Common myeloid progenitor, CD34-positive (primary cell): ENCODE measurements at regions of chr6 and their contacts with region 1.

Region 1: DNA sequence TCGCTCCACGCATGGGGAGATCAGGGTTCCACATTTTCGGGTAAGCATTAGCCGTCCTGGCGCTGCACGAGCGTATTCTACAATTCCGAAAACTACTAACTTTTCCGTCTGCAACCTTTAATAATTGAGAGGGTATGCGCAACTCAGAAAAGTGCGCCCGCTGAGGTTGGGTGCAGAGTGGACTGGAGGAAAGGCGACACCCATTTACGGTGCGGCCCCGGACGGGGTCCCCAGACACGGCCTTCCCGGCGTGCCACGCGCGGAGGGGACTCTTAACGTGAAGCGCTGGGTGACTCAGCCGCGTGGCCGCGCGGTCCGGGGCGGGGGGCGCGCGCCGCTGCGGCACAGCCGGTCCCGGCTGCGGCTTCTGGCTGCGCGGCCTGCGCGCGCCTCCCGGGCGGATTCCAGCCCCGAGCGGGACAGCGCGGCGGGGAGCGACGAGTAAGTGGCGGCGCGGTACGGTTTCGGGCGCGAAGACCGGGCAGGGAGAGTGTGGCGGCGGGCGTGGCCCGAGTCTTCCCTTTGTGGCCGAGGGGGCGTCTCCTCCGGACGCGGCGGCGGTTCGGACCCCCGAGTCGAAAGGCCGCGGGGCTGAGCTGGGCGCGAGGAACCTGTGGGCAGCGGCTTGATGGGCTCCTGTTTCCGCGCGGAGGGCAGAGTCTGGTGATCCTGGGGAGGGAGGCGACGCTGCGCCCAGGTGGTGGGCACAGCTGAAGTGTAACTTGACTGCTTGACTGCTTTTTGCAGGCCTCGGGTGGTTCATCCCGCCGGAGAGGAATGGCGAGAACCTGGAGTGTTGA is at the starts of genes KCTD20 and PXT1:
- DNase-seq: peak; percentile 88 to 95 (median 93)
- H3K4me3 ChIP-seq: peak within 1 kb of the TSS; percentile 86 to 94 (median 91)
- H3K27ac ChIP-seq: peak within 1 kb of the TSS; percentile 89 to 92
- H3K4me1 ChIP-seq: peaks cover 20 to 36% (median 27%) of the 10 kb centered on the region in 4 experiments
- H3K27me3 ChIP-seq: no peaks in the 10 kb centered on the region

Region 2: DNA sequence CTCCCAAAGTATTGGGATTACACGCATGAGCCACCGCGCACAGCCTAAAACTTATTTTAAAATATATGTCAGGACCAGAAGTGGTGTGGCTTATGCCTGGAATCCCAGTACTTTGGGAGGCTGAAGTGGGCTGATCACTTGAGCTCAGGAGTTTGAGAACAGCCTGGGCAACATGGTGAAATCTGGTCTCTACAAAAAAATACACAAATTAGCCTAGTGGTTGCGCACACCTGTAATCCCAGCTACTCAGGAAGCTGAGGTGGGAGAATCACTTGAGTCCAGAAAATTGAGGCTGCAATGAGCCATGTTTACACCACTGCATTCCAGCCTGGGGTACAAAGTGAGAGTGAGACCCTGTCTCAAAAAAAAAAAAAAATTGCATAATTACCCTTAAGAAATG is 14.0 kb before region 1 on chr6:
- CTCF ChIA-PET with region 1: interaction called, 13 read pairs
- POLR2A ChIA-PET with region 1: no interaction called
- DNase-seq: peak in 2 of 3 donors; percentile 11 to 24
- H3K4me3 ChIP-seq: no peak overlapping the region
- H3K27ac ChIP-seq: no peak overlapping the region
- H3K4me1 ChIP-seq: peaks cover 0 to 2% (median under 1%) of the 10 kb centered on the region in 4 experiments
- H3K27me3 ChIP-seq: no peaks in the 10 kb centered on the region